B cell (primary cell): ENCODE measurements at regions of chr17 and their contacts with region 1.

Region 1: DNA sequence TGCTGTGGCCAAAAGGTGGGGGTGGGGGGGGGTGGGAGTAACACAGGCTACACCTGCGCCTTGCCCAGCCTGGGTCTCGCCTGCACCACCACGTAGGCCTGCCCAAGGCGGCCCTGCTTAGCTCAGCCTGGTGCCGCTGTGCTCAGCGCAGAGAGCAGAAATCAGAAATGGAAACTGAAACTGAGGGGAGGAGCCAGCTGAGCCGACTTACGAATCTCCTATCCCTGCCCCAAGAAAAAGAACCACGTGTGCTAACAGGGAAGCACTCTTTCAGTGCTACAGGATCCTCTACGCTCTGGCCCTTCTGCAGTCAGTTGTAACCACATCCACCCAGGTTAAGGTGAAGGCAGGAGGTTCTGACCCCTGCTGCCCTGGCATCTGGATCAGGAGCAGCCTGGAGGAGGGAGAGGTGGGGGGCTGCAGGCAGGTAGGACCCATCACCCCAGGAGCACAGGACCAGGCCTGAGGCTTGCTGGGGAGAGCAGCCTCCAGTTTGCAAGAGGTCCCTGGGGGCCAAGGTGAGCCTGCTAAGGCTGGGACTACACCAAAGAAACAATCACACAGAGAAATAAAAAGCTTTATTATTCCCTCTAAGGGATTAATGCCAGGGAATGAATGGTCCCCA is at the start of gene DHX58:
- DNase-seq: peak; percentile 91
- ATAC-seq: peak; percentile 71
- H3K4me3 ChIP-seq: peak within 1 kb of the TSS; percentile 26 to 77 (median 53)
- H3K4me3 Mint-ChIP-seq: peak within 1 kb of the TSS; percentile 88
- H3K27ac ChIP-seq: peak within 1 kb of the TSS; percentile 85 to 88
- H3K27ac Mint-ChIP-seq: peak within 1 kb of the TSS; percentile 97
- H3K4me1 ChIP-seq: peaks cover 38 to 54% of the 10 kb centered on the region in 2 donors
- H3K4me1 Mint-ChIP-seq: peaks cover 57% of the 10 kb centered on the region
- H3K27me3 ChIP-seq: no peaks in the 10 kb centered on the region
- H3K27me3 Mint-ChIP-seq: no peaks in the 10 kb centered on the region
- CTCF ChIP-seq: no peak
- total RNA-seq, gene DHX58: 34.6 and 39.7 TPM in 2 replicates

Region 2: DNA sequence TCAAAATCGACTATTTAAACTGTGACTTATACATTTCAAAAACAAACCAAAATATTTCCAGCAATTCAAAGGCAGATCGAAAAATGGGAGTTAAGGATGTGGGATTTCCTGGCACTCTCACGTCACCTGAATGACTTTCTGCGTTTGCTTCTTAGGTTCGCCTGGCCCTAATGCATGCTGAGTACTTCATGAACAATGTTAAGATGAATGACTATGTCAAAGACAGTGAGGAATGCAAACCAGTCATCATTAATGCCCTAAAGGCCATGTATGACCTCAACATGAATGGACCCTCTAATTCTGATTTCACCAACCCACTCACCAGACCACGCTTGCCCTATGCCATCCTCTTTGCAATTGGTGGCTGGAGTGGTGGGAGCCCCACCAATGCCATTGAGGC is 267.7 kb before region 1 on chr17:
- CTCF ChIA-PET with region 1: no interaction called
- POLR2A ChIA-PET with region 1: no interaction called
- intact Hi-C with region 1: no loop called
- DNase-seq: no peak
- ATAC-seq: no peak
- H3K4me3 ChIP-seq: no peak overlapping the region
- H3K4me3 Mint-ChIP-seq: no peak overlapping the region
- H3K27ac ChIP-seq: no peak overlapping the region
- H3K27ac Mint-ChIP-seq: no peak overlapping the region
- H3K4me1 ChIP-seq: peaks cover 0 to 8% of the 10 kb centered on the region in 2 donors
- H3K4me1 Mint-ChIP-seq: peaks cover 11% of the 10 kb centered on the region
- H3K27me3 ChIP-seq: peaks cover 0 to 2% (median 0%) of the 10 kb centered on the region in 4 experiments
- H3K27me3 Mint-ChIP-seq: no peaks in the 10 kb centered on the region
- CTCF ChIP-seq: no peak

Region 3: DNA sequence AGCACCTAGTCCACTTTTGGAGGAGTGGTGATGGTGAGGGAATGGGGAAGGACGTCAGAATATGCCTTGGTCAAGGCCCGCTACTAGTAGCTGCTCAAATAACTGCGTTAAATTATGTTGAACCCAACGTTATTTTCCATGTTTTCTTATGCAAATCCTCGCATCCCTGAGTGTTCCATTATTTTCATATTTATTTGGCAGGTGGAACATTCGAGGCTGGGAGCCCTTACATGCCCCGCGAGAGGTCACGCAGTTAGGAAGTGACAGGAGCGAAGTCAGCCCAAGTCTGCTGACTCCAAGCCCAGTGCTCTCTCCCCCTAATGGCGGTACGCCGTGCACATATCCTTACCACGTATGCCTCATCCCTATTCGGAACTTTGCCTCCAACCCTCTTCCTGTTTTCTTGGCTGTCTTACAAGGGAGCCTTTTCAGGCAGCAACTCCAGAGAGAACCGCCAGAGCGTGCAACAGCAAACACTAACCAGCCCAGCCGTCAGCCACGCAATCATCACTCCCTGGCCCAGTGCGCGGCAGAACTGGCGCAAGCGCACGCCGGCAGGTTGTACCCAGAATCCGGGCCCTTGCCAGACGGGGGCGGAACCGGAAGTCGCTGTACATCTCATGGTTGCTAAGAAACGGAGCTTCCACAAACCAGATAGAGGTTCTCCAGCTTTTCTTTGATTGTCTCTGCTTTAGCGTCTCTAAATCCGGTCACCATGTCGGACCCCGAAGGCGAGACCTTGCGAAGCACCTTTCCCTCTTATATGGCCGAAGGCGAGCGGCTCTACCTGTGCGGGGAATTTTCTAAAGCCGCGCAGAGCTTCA is 182.4 kb before region 1 on chr17 and contains the start of gene ODAD4:
- CTCF ChIA-PET with region 1: interaction called, 4 read pairs
- POLR2A ChIA-PET with region 1: no interaction called
- intact Hi-C with region 1: loop called (anchors 1 kb)
- DNase-seq: peak; percentile 95
- ATAC-seq: peak; percentile 99
- H3K4me3 ChIP-seq: peak within 1 kb of the TSS; percentile 46 to 92 (median 81)
- H3K4me3 Mint-ChIP-seq: peak within 1 kb of the TSS; percentile 96
- H3K27ac ChIP-seq: peak within 1 kb of the TSS; percentile 60 to 83
- H3K27ac Mint-ChIP-seq: peak within 1 kb of the TSS; percentile 88
- H3K4me1 ChIP-seq: peaks cover 10 to 32% of the 10 kb centered on the region in 2 donors
- H3K4me1 Mint-ChIP-seq: peaks cover 30% of the 10 kb centered on the region
- H3K27me3 ChIP-seq: no peaks in the 10 kb centered on the region
- H3K27me3 Mint-ChIP-seq: no peaks in the 10 kb centered on the region
- CTCF ChIP-seq: no peak
- total RNA-seq, gene ODAD4: 0.27 and 0.56 TPM in 2 replicates

Region 4: DNA sequence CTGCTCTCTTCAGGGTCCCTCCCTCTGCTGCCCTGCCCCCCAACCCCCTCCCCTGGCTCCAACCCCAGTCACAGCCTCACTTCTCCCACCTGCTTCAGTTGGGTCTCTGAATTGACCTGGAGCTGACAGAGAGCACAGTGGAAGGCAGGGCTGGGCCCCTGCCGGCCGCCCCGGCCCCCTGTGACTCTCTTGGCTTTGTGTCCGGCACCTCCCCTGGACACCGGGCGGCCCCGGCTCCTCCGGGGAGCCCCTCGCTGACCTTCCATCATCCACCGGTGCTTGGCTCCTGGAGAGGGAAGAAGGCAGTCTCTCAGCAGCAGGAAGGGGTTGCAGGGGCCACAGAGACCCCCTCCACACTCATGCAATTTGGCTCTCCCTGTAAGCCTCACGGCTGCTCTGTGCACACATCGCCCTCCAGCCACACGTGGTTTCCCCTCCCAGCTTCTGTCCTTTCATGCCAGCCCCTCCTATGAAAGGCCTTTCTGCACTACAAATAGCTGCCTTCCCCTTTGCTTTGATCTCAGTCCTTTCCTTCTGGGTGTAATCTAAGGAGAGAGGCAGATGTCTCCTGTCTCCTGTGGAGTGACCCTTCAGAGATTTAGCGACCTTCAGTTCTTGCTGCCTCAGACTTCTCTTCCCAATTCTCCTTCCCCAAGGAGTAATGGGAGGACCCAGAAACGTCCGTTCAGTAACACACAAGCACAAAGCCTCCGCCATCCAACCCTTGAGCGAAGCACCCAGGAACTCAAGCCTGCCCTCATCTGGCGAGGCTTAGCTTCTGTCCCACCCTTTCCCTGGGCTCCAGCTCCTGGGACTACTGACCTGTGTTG is 84.5 kb before region 1 on chr17:
- CTCF ChIA-PET with region 1: interaction called, 80 read pairs
- POLR2A ChIA-PET with region 1: interaction called, 11 read pairs
- intact Hi-C with region 1: loop called (anchors 1 kb)
- DNase-seq: no peak
- ATAC-seq: no peak
- H3K4me3 ChIP-seq: no peak overlapping the region
- H3K4me3 Mint-ChIP-seq: no peak overlapping the region
- H3K27ac ChIP-seq: no peak overlapping the region
- H3K27ac Mint-ChIP-seq: no peak overlapping the region
- H3K4me1 ChIP-seq: peaks cover 11 to 14% of the 10 kb centered on the region in 2 donors
- H3K4me1 Mint-ChIP-seq: peaks cover 13% of the 10 kb centered on the region
- H3K27me3 ChIP-seq: peaks cover 0 to 3% (median 0%) of the 10 kb centered on the region in 4 experiments
- H3K27me3 Mint-ChIP-seq: no peaks in the 10 kb centered on the region
- CTCF ChIP-seq: no peak

Region 5: DNA sequence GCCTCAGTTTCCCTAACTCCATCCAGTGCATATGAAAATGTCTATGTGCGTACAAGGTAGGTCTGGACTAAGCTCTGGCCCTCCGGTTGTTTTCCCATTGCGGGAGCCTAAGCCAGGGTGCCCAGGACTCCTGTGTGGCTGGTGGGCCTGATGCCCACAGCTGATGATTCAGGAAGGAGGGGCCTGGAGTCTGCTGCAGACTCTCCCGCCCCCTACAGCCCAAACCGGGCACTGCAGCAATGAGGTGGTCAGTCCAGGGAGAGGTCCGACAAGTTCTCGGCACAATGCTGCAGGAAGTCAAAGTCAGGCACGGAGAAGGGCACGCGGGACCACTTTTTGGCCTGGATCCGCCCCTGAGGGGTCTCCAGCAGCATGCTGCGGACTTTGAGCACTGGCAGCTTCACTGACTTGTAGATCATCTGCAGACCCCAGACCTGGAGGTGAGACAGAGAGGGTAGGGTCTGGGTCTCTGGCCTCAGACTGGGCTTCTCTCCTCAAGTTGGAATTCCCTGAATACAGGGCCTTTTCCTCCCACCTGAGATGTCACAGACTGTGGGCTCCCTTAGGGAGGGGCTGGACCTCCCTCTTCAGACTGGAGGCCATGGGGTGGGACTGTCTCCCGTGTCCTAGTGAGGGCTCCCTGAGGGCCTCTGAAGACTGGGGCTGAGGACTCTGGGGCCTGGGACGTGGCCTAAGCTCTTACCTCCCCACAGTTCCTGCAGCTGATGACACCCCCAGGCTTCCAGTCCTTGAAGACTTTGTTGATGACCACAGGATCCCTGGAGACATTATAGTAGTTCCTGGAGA is 10.9 kb before region 1 on chr17:
- CTCF ChIA-PET with region 1: interaction called, 12 read pairs
- POLR2A ChIA-PET with region 1: interaction called, 4 read pairs
- intact Hi-C with region 1: loop called (anchors 1 kb)
- DNase-seq: peak; percentile 59
- ATAC-seq: peak; percentile 59
- H3K4me3 ChIP-seq: no peak overlapping the region
- H3K4me3 Mint-ChIP-seq: no peak overlapping the region
- H3K27ac ChIP-seq: no peak overlapping the region
- H3K27ac Mint-ChIP-seq: no peak overlapping the region
- H3K4me1 ChIP-seq: peaks cover 11 to 17% of the 10 kb centered on the region in 2 donors
- H3K4me1 Mint-ChIP-seq: peaks cover 9% of the 10 kb centered on the region
- H3K27me3 ChIP-seq: peaks cover 0 to 15% (median 9%) of the 10 kb centered on the region in 4 experiments
- H3K27me3 Mint-ChIP-seq: peaks cover 3% of the 10 kb centered on the region
- CTCF ChIP-seq: peak; percentile 78